ENCODE measurements at regions of chrX and their contacts with region 1.

Region 1: GRCh38 chrX:116198810-116199209 is 28.3 kb downstream of the AGTR2 start:
- DNase-seq: peak in 1 of 2 experiments; percentile 2
- H3K4me3 ChIP-seq: no peak overlapping the region
- H3K4me3 Mint-ChIP-seq: no peak overlapping the region
- H3K27ac Mint-ChIP-seq: no peak overlapping the region
- H3K4me1 ChIP-seq: no peaks in the 10 kb centered on the region
- H3K4me1 Mint-ChIP-seq: no peaks in the 10 kb centered on the region
- H3K27me3 ChIP-seq: no peaks in the 10 kb centered on the region
- H3K27me3 Mint-ChIP-seq: no peaks in the 10 kb centered on the region
- CTCF ChIP-seq: peak in 1 of 2 experiments; percentile 14

Region 2: DNA sequence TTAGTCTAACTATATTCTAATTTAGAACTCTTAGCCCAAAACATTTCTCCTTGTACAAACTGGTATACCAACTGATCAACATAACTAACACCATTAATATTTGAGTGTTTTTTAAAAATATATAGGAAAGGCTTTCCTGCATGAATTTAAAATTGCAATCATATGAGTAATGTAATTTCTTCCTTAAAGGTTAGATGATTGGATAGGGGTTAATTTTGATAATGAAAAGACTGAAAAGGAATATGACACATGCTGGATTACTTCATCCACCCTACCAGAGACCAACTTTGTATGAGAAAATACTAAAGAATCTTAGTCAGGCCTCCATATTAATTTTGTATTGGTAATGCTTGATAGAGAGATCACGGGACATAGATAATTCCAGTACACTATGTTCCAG is 663.0 kb before region 1 on chrX:
- CTCF ChIA-PET with region 1: no interaction called
- POLR2A ChIA-PET with region 1: no interaction called
- intact Hi-C with region 1: no loop called
- DNase-seq: no peak
- H3K4me3 ChIP-seq: no peak overlapping the region
- H3K4me3 Mint-ChIP-seq: no peak overlapping the region
- H3K27ac Mint-ChIP-seq: no peak overlapping the region
- H3K4me1 ChIP-seq: no peaks in the 10 kb centered on the region
- H3K4me1 Mint-ChIP-seq: no peaks in the 10 kb centered on the region
- H3K27me3 ChIP-seq: no peaks in the 10 kb centered on the region
- H3K27me3 Mint-ChIP-seq: no peaks in the 10 kb centered on the region
- CTCF ChIP-seq: no peak

Region 3: GRCh38 chrX:115988825-115989224 is 210.0 kb before region 1 on chrX:
- CTCF ChIA-PET with region 1: no interaction called
- POLR2A ChIA-PET with region 1: no interaction called
- intact Hi-C with region 1: loop called (anchors 1 kb)
- DNase-seq: no peak
- H3K4me3 ChIP-seq: no peak overlapping the region
- H3K4me3 Mint-ChIP-seq: no peak overlapping the region
- H3K27ac Mint-ChIP-seq: no peak overlapping the region
- H3K4me1 ChIP-seq: no peaks in the 10 kb centered on the region
- H3K4me1 Mint-ChIP-seq: no peaks in the 10 kb centered on the region
- H3K27me3 ChIP-seq: no peaks in the 10 kb centered on the region
- H3K27me3 Mint-ChIP-seq: no peaks in the 10 kb centered on the region
- CTCF ChIP-seq: peak in 1 of 2 experiments; percentile 29

Region 4: GRCh38 chrX:116277351-116278225 is 78.8 kb after region 1 on chrX:
- CTCF ChIA-PET with region 1: no interaction called
- POLR2A ChIA-PET with region 1: no interaction called
- intact Hi-C with region 1: no loop called
- DNase-seq: no peak
- H3K4me3 ChIP-seq: no peak overlapping the region
- H3K4me3 Mint-ChIP-seq: no peak overlapping the region
- H3K27ac Mint-ChIP-seq: no peak overlapping the region
- H3K4me1 ChIP-seq: 0 out of 2 replicates have a peak, but pooled peaks cover 12% of the 10 kb centered on the region
- H3K4me1 Mint-ChIP-seq: peaks cover 23% of the 10 kb centered on the region
- H3K27me3 ChIP-seq: no peaks in the 10 kb centered on the region
- H3K27me3 Mint-ChIP-seq: no peaks in the 10 kb centered on the region
- CTCF ChIP-seq: no peak

Region 5: DNA sequence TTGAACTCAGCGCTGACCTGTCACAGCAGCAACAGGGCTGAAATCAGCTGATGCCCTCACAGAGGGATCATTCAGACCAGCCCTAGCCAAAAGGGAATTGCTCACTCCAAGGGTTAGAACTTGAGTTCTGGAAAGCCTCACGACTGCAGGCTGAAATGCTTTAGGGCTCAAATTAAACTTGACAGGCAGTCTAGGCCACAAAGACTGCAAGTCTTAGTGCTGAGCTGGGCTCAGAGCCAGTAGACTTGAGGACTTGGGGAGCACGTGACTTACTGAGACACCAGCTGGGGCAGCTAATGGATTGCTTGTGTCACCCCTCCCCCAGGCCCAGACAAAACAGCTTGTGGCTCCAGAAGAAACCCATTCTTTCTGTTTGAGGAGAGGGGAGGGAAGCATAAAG is 118.6 kb after region 1 on chrX:
- CTCF ChIA-PET with region 1: no interaction called
- POLR2A ChIA-PET with region 1: no interaction called
- intact Hi-C with region 1: no loop called
- DNase-seq: no peak
- H3K4me3 ChIP-seq: no peak overlapping the region
- H3K4me3 Mint-ChIP-seq: no peak overlapping the region
- H3K27ac Mint-ChIP-seq: no peak overlapping the region
- H3K4me1 ChIP-seq: no peaks in the 10 kb centered on the region
- H3K4me1 Mint-ChIP-seq: no peaks in the 10 kb centered on the region
- H3K27me3 ChIP-seq: no peaks in the 10 kb centered on the region
- H3K27me3 Mint-ChIP-seq: no peaks in the 10 kb centered on the region
- CTCF ChIP-seq: no peak